ENCODE measurements at regions of chr1 and their contacts with region 1.

Region 1: GRCh38 chr1:147700042-147701006 is 30.0 kb upstream of the ACP6 start:
- DNase-seq: peak; percentile 63 to 70 (median 68)
- H3K4me3 ChIP-seq: no peak overlapping the region
- H3K4me3 Mint-ChIP-seq: peak overlapping the region in 7 of 8 donors; percentile 40 to 80 (median 70)
- H3K27ac ChIP-seq: peak overlapping the region; percentile 30
- H3K27ac Mint-ChIP-seq: peak overlapping the region; percentile 37 to 91 (median 73)
- H3K4me1 ChIP-seq: peaks cover 9% of the 10 kb centered on the region
- H3K4me1 Mint-ChIP-seq: peaks cover 12 to 21% (median 17%) of the 10 kb centered on the region in 4 donors
- H3K27me3 ChIP-seq: no peaks in the 10 kb centered on the region
- H3K27me3 Mint-ChIP-seq: peaks cover 5 to 9% of the 10 kb centered on the region in 2 donors

Region 2: GRCh38 chr1:147494998-147495580 is 205.2 kb before region 1 on chr1:
- CTCF ChIA-PET with region 1: interaction called, 4 read pairs
- POLR2A ChIA-PET with region 1: no interaction called
- intact Hi-C with region 1: loop called (anchors 1 kb)
- DNase-seq: peak; percentile 65 to 70 (median 67)
- H3K4me3 ChIP-seq: no peak overlapping the region
- H3K4me3 Mint-ChIP-seq: peak overlapping the region in 2 of 8 donors; percentile 12 to 64
- H3K27ac ChIP-seq: no peak overlapping the region
- H3K27ac Mint-ChIP-seq: no peak overlapping the region
- H3K4me1 ChIP-seq: no peaks in the 10 kb centered on the region
- H3K4me1 Mint-ChIP-seq: peaks cover 0 to 2% (median under 1%) of the 10 kb centered on the region in 4 donors
- H3K27me3 ChIP-seq: no peaks in the 10 kb centered on the region
- H3K27me3 Mint-ChIP-seq: peaks cover 0 to 10% of the 10 kb centered on the region in 2 donors

Region 3: GRCh38 chr1:147515046-147515869 is 185.1 kb before region 1 on chr1:
- CTCF ChIA-PET with region 1: interaction called, 4 read pairs
- POLR2A ChIA-PET with region 1: no interaction called
- intact Hi-C with region 1: loop called (anchors 1 kb)
- DNase-seq: peak in 4 of 5 donors; percentile 9 to 29 (median 24)
- H3K4me3 ChIP-seq: no peak overlapping the region
- H3K4me3 Mint-ChIP-seq: no peak overlapping the region
- H3K27ac ChIP-seq: no peak overlapping the region
- H3K27ac Mint-ChIP-seq: peak overlapping the region in 2 of 7 donors; percentile 39 to 51
- H3K4me1 ChIP-seq: no peaks in the 10 kb centered on the region
- H3K4me1 Mint-ChIP-seq: peaks cover 5 to 7% (median 6%) of the 10 kb centered on the region in 4 donors
- H3K27me3 ChIP-seq: no peaks in the 10 kb centered on the region
- H3K27me3 Mint-ChIP-seq: peaks cover 0 to 9% of the 10 kb centered on the region in 2 donors

Region 4: GRCh38 chr1:147560756-147561471 is 139.4 kb before region 1 on chr1:
- CTCF ChIA-PET with region 1: no interaction called
- POLR2A ChIA-PET with region 1: no interaction called
- intact Hi-C with region 1: no loop called
- DNase-seq: no peak
- H3K4me3 ChIP-seq: no peak overlapping the region
- H3K4me3 Mint-ChIP-seq: no peak overlapping the region
- H3K27ac ChIP-seq: no peak overlapping the region
- H3K27ac Mint-ChIP-seq: no peak overlapping the region
- H3K4me1 ChIP-seq: no peaks in the 10 kb centered on the region
- H3K4me1 Mint-ChIP-seq: peaks cover 0 to 12% (median 6%) of the 10 kb centered on the region in 4 donors
- H3K27me3 ChIP-seq: no peaks in the 10 kb centered on the region
- H3K27me3 Mint-ChIP-seq: peaks cover 0 to 2% of the 10 kb centered on the region in 2 donors

Region 5: GRCh38 chr1:147794570-147794969 is 94.2 kb after region 1 on chr1:
- CTCF ChIA-PET with region 1: no interaction called
- POLR2A ChIA-PET with region 1: no interaction called
- intact Hi-C with region 1: no loop called
- DNase-seq: no peak
- H3K4me3 ChIP-seq: no peak overlapping the region
- H3K4me3 Mint-ChIP-seq: no peak overlapping the region
- H3K27ac ChIP-seq: no peak overlapping the region
- H3K27ac Mint-ChIP-seq: no peak overlapping the region
- H3K4me1 ChIP-seq: no peaks in the 10 kb centered on the region
- H3K4me1 Mint-ChIP-seq: no peaks in the 10 kb centered on the region
- H3K27me3 ChIP-seq: no peaks in the 10 kb centered on the region
- H3K27me3 Mint-ChIP-seq: no peaks in the 10 kb centered on the region

Region 6: GRCh38 chr1:147808025-147808424 is 107.7 kb after region 1 on chr1:
- CTCF ChIA-PET with region 1: no interaction called
- POLR2A ChIA-PET with region 1: no interaction called
- intact Hi-C with region 1: no loop called
- DNase-seq: no peak
- H3K4me3 ChIP-seq: no peak overlapping the region
- H3K4me3 Mint-ChIP-seq: no peak overlapping the region
- H3K27ac ChIP-seq: no peak overlapping the region
- H3K27ac Mint-ChIP-seq: no peak overlapping the region
- H3K4me1 ChIP-seq: no peaks in the 10 kb centered on the region
- H3K4me1 Mint-ChIP-seq: peaks cover 0 to 8% (median 3%) of the 10 kb centered on the region in 4 donors
- H3K27me3 ChIP-seq: no peaks in the 10 kb centered on the region
- H3K27me3 Mint-ChIP-seq: peaks cover 3 to 6% of the 10 kb centered on the region in 2 donors

Measured in CD4-positive, alpha-beta memory T cell (primary cell).